ENCODE measurements at regions of chr1 and their contacts with region 1.

Region 1: DNA sequence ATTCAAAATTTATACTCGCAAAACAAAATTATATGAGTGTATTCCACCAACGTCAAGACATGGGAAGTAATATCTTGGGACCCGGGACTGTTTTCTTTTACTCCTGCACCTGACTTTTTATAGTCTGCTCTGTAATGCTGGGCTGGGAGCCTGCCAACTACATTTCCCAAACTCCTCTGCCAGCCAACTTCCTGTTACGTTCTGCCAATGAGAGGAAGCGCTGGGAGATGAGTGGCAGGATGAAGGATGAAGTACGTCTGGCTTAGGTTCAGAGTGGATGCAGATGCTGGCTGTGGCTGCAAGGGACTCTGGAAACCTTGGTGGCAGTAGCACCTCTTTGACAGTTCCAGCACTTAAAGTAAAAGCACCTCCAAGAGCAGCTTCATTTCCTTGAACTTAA is 59.6 kb downstream of the USP24 start:
- DNase-seq: no peak
- ATAC-seq: no peak
- H3K4me3 Mint-ChIP-seq: no peak overlapping the region
- H3K27ac Mint-ChIP-seq: no peak overlapping the region
- H3K4me1 Mint-ChIP-seq: peaks cover 26% of the 10 kb centered on the region
- H3K27me3 Mint-ChIP-seq: no peaks in the 10 kb centered on the region

Region 2: GRCh38 chr1:54745274-54745673 is 410.2 kb before region 1 on chr1:
- CTCF ChIA-PET with region 1: no interaction called
- DNase-seq: no peak
- ATAC-seq: no peak
- H3K4me3 Mint-ChIP-seq: no peak overlapping the region
- H3K27ac Mint-ChIP-seq: no peak overlapping the region
- H3K4me1 Mint-ChIP-seq: no peaks in the 10 kb centered on the region
- H3K27me3 Mint-ChIP-seq: no peaks in the 10 kb centered on the region

Region 3: GRCh38 chr1:55071477-55071876 is 84.0 kb before region 1 on chr1:
- CTCF ChIA-PET with region 1: no interaction called
- DNase-seq: peak; percentile 41
- ATAC-seq: peak; percentile 43
- H3K4me3 Mint-ChIP-seq: no peak overlapping the region
- H3K27ac Mint-ChIP-seq: no peak overlapping the region
- H3K4me1 Mint-ChIP-seq: peaks cover 31% of the 10 kb centered on the region
- H3K27me3 Mint-ChIP-seq: no peaks in the 10 kb centered on the region

Region 4: GRCh38 chr1:55140546-55140983 is 14.9 kb before region 1 on chr1:
- CTCF ChIA-PET with region 1: interaction called, 11 read pairs
- DNase-seq: peak; percentile 86
- ATAC-seq: peak; percentile 98
- H3K4me3 Mint-ChIP-seq: no peak overlapping the region
- H3K27ac Mint-ChIP-seq: peak overlapping the region; percentile 38
- H3K4me1 Mint-ChIP-seq: peaks cover 22% of the 10 kb centered on the region
- H3K27me3 Mint-ChIP-seq: no peaks in the 10 kb centered on the region

Region 5: GRCh38 chr1:55225213-55225612 is 69.7 kb after region 1 on chr1:
- CTCF ChIA-PET with region 1: no interaction called
- DNase-seq: no peak
- ATAC-seq: no peak
- H3K4me3 Mint-ChIP-seq: no peak overlapping the region
- H3K27ac Mint-ChIP-seq: no peak overlapping the region
- H3K4me1 Mint-ChIP-seq: no peaks in the 10 kb centered on the region
- H3K27me3 Mint-ChIP-seq: no peaks in the 10 kb centered on the region